BJ (cell line): ENCODE measurements at regions of chr9 and their contacts with region 1.

Region 1: GRCh38 chr9:124894741-124895170 is 32.8 kb downstream of the ARPC5L start:
- DNase-seq: no peak
- H3K4me3 ChIP-seq: no peak overlapping the region
- H3K27me3 ChIP-seq: no peaks in the 10 kb centered on the region
- CTCF ChIP-seq: peak; percentile 67

Region 2: DNA sequence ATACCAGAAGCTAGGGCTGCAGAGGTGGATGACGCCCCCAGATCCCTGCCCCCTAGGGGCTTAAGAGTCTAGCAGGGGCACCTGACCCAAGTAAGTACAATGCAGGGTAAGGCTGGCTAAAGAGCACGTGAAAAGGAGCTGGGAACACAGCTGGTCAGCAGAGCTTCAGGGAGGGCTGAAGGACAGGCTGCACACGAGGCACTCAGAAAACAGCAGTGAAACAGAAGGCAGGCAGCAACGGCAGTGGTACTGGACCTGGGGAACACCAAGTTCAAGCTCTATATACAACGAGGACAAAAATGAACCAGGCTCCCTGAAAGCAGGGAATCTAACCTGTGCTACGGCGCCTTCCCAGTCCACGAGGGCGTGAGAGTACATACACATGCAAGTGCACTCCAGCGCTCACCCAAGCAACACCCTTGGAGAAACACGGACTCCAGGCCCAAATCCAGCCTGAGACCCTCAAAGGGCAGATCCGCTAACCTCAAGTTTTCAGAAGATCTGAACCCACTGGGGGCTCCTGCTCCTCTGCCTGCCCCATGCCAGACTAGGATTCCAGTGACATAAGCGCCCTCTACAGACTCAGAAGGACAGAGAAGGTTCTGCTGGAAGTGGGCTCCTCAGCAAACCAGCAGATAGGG is 536.9 kb before region 1 on chr9:
- CTCF ChIA-PET with region 1: no interaction called
- POLR2A ChIA-PET with region 1: no interaction called
- DNase-seq: no peak
- H3K4me3 ChIP-seq: no peak overlapping the region
- H3K27me3 ChIP-seq: no peaks in the 10 kb centered on the region
- CTCF ChIP-seq: peak; percentile 35

Region 3: GRCh38 chr9:124880501-124880900 is 14.3 kb before region 1 on chr9:
- CTCF ChIA-PET with region 1: interaction called, 13 read pairs
- POLR2A ChIA-PET with region 1: no interaction called
- DNase-seq: no peak
- H3K4me3 ChIP-seq: no peak overlapping the region
- H3K27me3 ChIP-seq: no peaks in the 10 kb centered on the region
- CTCF ChIP-seq: no peak

Region 4: DNA sequence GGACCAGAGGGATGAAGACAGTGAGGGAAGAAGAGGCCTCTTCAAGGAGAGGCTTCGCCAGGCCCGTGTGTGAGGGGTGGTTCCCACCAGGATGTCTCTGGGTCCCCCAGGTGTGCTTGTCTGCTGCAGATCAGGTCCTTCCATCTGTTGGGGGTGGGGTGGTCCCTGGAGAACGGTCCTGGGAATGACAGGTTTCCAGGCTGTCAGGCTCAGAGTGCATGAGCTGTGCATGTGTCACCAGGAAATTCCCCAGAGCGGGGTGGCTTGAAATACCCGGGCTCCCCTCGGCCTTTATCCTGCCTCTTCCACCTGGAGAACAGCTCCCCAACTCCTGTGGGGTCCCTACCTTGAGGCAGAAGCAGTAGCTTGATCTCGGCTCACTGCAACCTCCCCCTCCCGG is 485.6 kb after region 1 on chr9:
- CTCF ChIA-PET with region 1: no interaction called
- POLR2A ChIA-PET with region 1: no interaction called
- DNase-seq: no peak
- H3K4me3 ChIP-seq: no peak overlapping the region
- H3K27me3 ChIP-seq: peaks cover 7% of the 10 kb centered on the region
- CTCF ChIP-seq: no peak